ENCODE measurements at regions of chr11 and their contacts with region 1.

Region 1: DNA sequence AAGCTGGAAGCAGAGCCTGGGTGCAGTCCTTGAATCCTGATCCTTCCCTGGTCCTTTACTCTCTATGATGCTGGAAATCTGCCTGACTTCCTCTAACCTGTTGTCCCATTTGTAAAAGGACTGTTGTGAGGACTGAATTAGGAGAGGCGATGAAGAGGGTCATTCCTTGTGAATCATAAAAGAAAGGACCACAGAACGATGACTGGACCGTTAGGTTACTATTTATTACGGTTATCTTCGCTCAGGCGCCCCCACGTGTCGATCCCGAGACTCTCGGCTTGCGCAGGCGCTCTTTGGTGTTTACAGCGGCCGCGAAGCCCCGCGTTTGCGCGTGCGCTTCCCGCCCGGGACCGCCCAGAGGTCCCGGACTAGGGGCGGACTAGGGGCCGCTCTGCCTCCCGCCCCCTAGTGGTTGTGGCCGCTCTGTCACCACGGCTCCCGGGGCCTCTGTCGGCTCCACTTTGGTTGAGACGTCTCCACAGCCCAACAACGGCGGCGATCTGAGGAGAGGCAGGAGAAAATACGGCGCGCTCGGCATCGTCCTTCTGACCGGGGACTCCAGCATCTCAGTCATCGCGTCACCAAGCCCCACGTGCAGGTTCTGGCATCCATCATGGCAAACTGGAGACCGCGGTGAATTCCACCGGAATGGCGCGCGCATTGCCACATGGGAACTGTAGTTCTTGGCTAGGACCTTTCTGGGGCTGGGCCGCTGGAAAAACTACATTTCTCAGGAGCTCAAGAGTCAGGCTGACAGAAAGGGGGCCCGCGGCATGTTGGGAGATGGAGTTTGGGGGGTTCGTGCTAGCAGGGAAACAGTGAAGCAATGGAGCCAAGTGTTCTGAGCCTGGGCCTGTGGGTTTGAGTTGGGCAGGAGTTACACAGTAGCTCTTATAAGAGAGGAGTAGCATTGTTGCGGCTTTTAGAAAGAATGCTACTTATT is at the start of gene STARD10:
- DNase-seq: peak; percentile 99
- ATAC-seq: peak; percentile 95
- H3K4me3 ChIP-seq: peak within 1 kb of the TSS; percentile 77
- H3K27ac ChIP-seq: peak within 1 kb of the TSS; percentile 40
- H3K4me1 ChIP-seq: peaks cover 27% of the 10 kb centered on the region
- H3K27me3 ChIP-seq: no peaks in the 10 kb centered on the region
- CTCF ChIP-seq: peak; percentile 99
- total RNA-seq, gene STARD10: 284 and 362 TPM in 2 replicates

Region 2: GRCh38 chr11:72752088-72752914 is 41.4 kb before region 1 on chr11 and contains the start of gene ARAP1:
- CTCF ChIA-PET with region 1: interaction called, 3 read pairs
- POLR2A ChIA-PET with region 1: no interaction called
- intact Hi-C with region 1: loop called (anchors 1 kb)
- DNase-seq: peak; percentile 92
- ATAC-seq: peak; percentile 83
- H3K4me3 ChIP-seq: peak within 1 kb of the TSS; percentile 82
- H3K27ac ChIP-seq: peak within 1 kb of the TSS; percentile 60
- H3K4me1 ChIP-seq: peaks cover 24% of the 10 kb centered on the region
- H3K27me3 ChIP-seq: no peaks in the 10 kb centered on the region
- CTCF ChIP-seq: no peak
- total RNA-seq, gene ARAP1: 86.2 and 124 TPM in 2 replicates

Region 3: DNA sequence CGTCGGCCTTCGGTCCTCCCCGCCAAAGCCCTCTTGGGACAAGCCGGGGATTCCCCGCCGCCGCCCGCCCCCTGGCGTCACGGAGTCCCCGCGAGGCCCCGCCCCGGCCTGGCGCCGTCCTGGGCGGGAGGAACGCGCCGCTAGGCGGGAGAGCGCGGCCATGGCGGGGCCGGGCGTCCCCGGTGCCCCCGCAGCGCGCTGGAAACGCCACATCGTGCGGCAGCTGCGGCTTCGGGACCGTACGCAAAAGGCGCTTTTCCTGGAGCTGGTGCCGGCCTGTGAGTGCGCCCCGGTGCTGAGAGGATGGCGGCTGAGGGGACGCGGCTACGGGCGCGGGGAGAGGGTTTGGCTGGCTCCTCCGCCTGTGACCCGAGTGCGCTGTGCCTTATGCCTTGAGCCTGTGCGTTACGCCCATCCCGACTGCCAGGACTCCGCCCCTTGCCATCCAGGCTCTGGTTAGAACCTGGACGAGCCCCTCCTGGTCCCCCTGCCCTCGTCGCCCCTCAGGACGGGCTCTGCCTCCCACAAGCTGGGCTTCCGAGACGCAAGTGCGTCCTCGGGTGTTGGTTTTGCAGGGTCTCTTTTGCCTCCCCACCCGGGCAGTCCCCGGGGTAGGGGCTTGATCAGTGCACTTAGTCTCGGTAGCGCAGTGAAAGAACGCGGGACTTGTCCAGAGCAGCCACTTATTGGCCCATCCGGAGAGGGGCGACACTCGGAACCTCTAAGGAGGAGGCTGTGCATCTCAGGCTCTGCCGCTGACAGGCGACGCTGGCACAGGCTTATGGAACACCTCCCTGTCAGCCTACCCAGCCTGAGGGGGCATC is 20.8 kb after region 1 on chr11 and contains the start of gene ATG16L2:
- CTCF ChIA-PET with region 1: interaction called, 3 read pairs
- POLR2A ChIA-PET with region 1: no interaction called
- intact Hi-C with region 1: loop called (anchors 1 kb)
- DNase-seq: peak; percentile 92
- ATAC-seq: peak; percentile 73
- H3K4me3 ChIP-seq: peak within 1 kb of the TSS; percentile 79
- H3K27ac ChIP-seq: peak within 1 kb of the TSS; percentile 89
- H3K4me1 ChIP-seq: peaks cover 30% of the 10 kb centered on the region
- H3K27me3 ChIP-seq: no peaks in the 10 kb centered on the region
- CTCF ChIP-seq: no peak
- total RNA-seq, gene ATG16L2: 12.2 and 16.2 TPM in 2 replicates

Region 4: DNA sequence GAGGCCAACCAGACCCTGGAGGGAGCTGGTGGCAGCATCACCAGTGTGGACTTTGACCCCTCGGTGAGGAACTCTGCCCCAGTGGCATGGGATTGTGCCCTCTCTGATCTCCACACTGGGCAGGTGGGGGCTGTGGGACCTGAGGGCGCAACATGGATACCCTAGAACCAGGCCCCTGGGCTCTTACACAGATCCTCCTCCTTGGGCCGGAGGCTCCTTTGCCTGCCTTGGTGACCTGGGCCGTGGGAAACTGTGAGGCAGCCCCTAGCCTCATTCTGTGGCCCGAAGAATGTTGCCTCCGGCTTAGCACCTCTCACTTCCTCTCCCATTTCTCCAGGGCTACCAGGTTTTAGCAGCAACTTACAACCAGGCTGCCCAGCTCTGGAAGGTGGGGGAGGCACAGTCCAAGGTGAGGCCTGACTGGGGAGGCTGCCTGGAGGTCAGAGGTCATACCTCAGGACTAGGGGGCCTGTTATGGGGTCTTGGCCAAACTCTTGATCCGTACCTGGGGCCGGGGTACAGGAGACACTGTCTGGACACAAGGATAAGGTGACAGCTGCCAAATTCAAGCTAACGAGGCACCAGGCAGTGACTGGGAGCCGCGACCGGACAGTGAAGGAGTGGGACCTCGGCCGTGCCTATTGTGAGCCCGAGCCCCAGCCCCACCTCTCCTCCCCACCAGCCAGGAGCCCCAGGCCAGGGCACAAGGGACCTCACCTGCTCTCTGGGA is 32.6 kb after region 1 on chr11:
- CTCF ChIA-PET with region 1: no interaction called
- POLR2A ChIA-PET with region 1: no interaction called
- intact Hi-C with region 1: no loop called
- DNase-seq: no peak
- ATAC-seq: no peak
- H3K4me3 ChIP-seq: no peak overlapping the region
- H3K27ac ChIP-seq: no peak overlapping the region
- H3K4me1 ChIP-seq: peaks cover 6% of the 10 kb centered on the region
- H3K27me3 ChIP-seq: no peaks in the 10 kb centered on the region
- CTCF ChIP-seq: no peak

Region 5: GRCh38 chr11:72856551-72857345 is 63.1 kb after region 1 on chr11:
- CTCF ChIA-PET with region 1: no interaction called
- POLR2A ChIA-PET with region 1: no interaction called
- intact Hi-C with region 1: no loop called
- DNase-seq: no peak
- ATAC-seq: no peak
- H3K4me3 ChIP-seq: no peak overlapping the region
- H3K27ac ChIP-seq: no peak overlapping the region
- H3K4me1 ChIP-seq: no peaks in the 10 kb centered on the region
- H3K27me3 ChIP-seq: no peaks in the 10 kb centered on the region
- CTCF ChIP-seq: no peak